Heart right ventricle (tissue), 16 donors: ENCODE measurements at regions of chr13 and their contacts with region 1.

Region 1: DNA sequence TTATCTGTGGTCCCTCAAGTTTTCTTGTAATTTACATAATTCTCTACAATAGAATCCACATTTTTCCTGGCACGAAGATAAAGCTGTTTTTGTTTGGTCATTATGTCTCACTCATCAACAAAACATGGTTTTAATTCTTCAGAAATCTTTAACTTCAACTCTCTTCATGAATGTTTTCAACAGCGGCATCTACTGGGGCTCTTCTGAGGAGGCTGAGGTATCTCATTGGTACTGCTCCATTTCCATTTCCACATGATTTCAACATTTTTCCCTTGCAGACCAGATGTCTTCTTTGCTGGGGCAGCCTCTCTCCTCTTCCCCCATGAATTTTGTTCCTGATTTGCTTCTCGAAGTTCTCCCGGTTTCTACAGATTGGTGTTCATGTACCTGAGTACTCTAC is 5.8 kb upstream of the KBTBD7 start:
- DNase-seq: no peak
- ATAC-seq: no peak
- H3K4me3 ChIP-seq: no peak overlapping the region
- H3K27ac ChIP-seq: no peak overlapping the region
- H3K4me1 ChIP-seq: no peaks in the 10 kb centered on the region
- H3K27me3 ChIP-seq: no peaks in the 10 kb centered on the region
- CTCF ChIP-seq: no peak

Region 2: GRCh38 chr13:40589285-40590109 is 610.6 kb before region 1 on chr13:
- intact Hi-C with region 1: no loop called
- DNase-seq: peak in 1 of 2 donors; percentile 70
- ATAC-seq: peak; percentile 80 to 92 (median 86)
- H3K4me3 ChIP-seq: peak overlapping the region in 1 of 10 donors; percentile 7
- H3K27ac ChIP-seq: peak overlapping the region; percentile 55 to 91 (median 68)
- H3K4me1 ChIP-seq: peaks cover 17 to 96% (median 75%) of the 10 kb centered on the region in 9 donors
- H3K27me3 ChIP-seq: no peaks in the 10 kb centered on the region
- CTCF ChIP-seq: no peak

Region 3: GRCh38 chr13:41132512-41133152 is 67.5 kb before region 1 on chr13 and contains the start of gene KBTBD6:
- intact Hi-C with region 1: loop called in 5 of 10 experiments (anchors 2 to 10 kb)
- DNase-seq: peak; percentile 93 to 96
- ATAC-seq: peak; percentile 99
- H3K4me3 ChIP-seq: peak within 1 kb of the TSS; percentile 46 to 88 (median 74)
- H3K27ac ChIP-seq: peak within 1 kb of the TSS in 9 of 10 donors; percentile 72 to 90 (median 85)
- H3K4me1 ChIP-seq: peaks cover 0 to 54% (median 48%) of the 10 kb centered on the region in 9 donors
- H3K27me3 ChIP-seq: no peaks in the 10 kb centered on the region
- CTCF ChIP-seq: no peak
- total RNA-seq, gene KBTBD6: 5.4 to 10.6 (median 6.9) TPM

Region 4: DNA sequence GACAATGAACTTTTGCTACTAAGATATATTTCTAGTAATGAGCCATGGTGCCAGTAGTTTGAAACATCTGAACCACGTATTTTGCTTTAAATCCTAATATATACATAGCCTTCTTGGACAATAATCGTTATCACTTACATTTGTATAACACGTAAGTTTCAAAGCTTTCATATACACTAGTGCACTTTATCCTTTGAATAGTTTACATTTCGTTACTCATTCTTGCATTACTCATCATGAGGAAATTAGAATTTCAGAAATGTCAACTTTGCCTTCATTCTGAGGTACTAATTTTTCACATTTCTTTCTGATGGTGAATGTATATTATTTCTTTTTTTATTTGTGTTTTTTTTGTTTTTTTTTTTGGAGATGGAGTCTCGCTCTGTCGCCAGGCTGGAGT is 11.5 kb before region 1 on chr13:
- intact Hi-C with region 1: no loop called
- DNase-seq: no peak
- ATAC-seq: no peak
- H3K4me3 ChIP-seq: no peak overlapping the region
- H3K27ac ChIP-seq: no peak overlapping the region
- H3K4me1 ChIP-seq: peaks cover 2 to 25% (median 16%) of the 10 kb centered on the region in 9 donors
- H3K27me3 ChIP-seq: no peaks in the 10 kb centered on the region
- CTCF ChIP-seq: no peak